Activated CD8-positive, alpha-beta T cell treated with anti-CD3 and anti-CD28 coated beads for 36 hours (primary cell): ENCODE measurements at regions of chr3 and their contacts with region 1.

Region 1: GRCh38 chr3:170848292-170848917 is 21.6 kb downstream of the RPL22L1 start:
- DNase-seq: no peak
- ATAC-seq: no peak
- H3K4me3 Mint-ChIP-seq: no peak overlapping the region
- H3K27ac Mint-ChIP-seq: no peak overlapping the region
- H3K4me1 Mint-ChIP-seq: no peaks in the 10 kb centered on the region
- H3K27me3 Mint-ChIP-seq: peaks cover 12% of the 10 kb centered on the region
- CTCF ChIP-seq: no peak

Region 2: GRCh38 chr3:170660139-170660538 is 188.3 kb before region 1 on chr3:
- CTCF ChIA-PET with region 1: no interaction called
- POLR2A ChIA-PET with region 1: no interaction called
- intact Hi-C with region 1: no loop called
- DNase-seq: no peak
- ATAC-seq: no peak
- H3K4me3 Mint-ChIP-seq: no peak overlapping the region
- H3K27ac Mint-ChIP-seq: no peak overlapping the region
- H3K4me1 Mint-ChIP-seq: no peaks in the 10 kb centered on the region
- H3K27me3 Mint-ChIP-seq: peaks cover 3% of the 10 kb centered on the region
- CTCF ChIP-seq: no peak

Region 3: DNA sequence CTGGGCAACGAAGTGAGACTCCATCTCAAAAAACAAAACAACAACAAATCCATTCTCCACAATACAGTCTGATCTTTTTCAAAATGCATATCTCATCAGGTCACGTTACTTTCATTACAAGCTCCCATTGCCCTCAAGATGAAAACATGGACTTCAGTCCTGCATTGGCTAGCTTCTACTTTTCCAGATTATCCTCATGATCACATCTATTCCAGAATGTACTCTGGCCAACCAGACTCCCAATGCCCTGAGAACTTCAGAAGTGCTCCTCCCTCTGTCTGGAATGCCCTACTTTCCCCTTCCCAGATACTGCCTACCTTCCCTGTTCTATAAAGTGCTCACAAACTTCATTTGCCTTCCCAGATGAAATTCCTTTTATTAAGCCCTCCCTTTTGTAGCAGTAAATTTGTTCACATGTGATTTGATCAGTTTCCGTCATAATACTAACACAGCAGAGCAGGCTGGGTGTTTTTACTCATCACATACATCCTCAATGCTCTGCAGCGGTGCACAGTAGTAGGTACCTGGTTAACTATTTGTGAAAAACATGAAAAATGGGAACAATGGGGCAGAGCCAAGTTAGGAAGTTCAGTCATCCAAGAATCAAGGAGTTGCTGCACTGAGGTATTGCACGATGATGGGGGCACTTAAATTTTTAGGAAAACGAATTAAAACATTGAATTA is 16.3 kb after region 1 on chr3:
- CTCF ChIA-PET with region 1: interaction called, 3 read pairs
- POLR2A ChIA-PET with region 1: interaction called, 11 read pairs
- intact Hi-C with region 1: no loop called
- DNase-seq: no peak
- ATAC-seq: no peak
- H3K4me3 Mint-ChIP-seq: no peak overlapping the region
- H3K27ac Mint-ChIP-seq: no peak overlapping the region
- H3K4me1 Mint-ChIP-seq: peaks cover 9% of the 10 kb centered on the region
- H3K27me3 Mint-ChIP-seq: no peaks in the 10 kb centered on the region
- CTCF ChIP-seq: no peak

Region 4: GRCh38 chr3:170869645-170870593 is 21.5 kb after region 1 on chr3 and contains the start of gene RPL22L1:
- CTCF ChIA-PET with region 1: no interaction called
- POLR2A ChIA-PET with region 1: interaction called, 11 read pairs
- intact Hi-C with region 1: no loop called
- DNase-seq: peak; percentile 96
- ATAC-seq: peak; percentile 94
- H3K4me3 Mint-ChIP-seq: peak within 1 kb of the TSS; percentile 87
- H3K27ac Mint-ChIP-seq: peak within 1 kb of the TSS; percentile 95
- H3K4me1 Mint-ChIP-seq: peaks cover 19% of the 10 kb centered on the region
- H3K27me3 Mint-ChIP-seq: no peaks in the 10 kb centered on the region
- CTCF ChIP-seq: no peak
- total RNA-seq, gene RPL22L1: 421 to 453 TPM